Transverse colon (tissue), 4 donors: ENCODE measurements at regions of chr4 and their contacts with region 1.

Region 1: GRCh38 chr4:38297061-38297460 is 336.9 kb downstream of the PTTG2 start:
- DNase-seq: no peak
- H3K4me3 ChIP-seq: no peak overlapping the region
- H3K27ac ChIP-seq: no peak overlapping the region
- H3K4me1 ChIP-seq: no peaks in the 10 kb centered on the region
- H3K27me3 ChIP-seq: no peaks in the 10 kb centered on the region
- CTCF ChIP-seq: no peak
- EP300 ChIP-seq: no peak
- POLR2A ChIP-seq: no peak

Region 2: DNA sequence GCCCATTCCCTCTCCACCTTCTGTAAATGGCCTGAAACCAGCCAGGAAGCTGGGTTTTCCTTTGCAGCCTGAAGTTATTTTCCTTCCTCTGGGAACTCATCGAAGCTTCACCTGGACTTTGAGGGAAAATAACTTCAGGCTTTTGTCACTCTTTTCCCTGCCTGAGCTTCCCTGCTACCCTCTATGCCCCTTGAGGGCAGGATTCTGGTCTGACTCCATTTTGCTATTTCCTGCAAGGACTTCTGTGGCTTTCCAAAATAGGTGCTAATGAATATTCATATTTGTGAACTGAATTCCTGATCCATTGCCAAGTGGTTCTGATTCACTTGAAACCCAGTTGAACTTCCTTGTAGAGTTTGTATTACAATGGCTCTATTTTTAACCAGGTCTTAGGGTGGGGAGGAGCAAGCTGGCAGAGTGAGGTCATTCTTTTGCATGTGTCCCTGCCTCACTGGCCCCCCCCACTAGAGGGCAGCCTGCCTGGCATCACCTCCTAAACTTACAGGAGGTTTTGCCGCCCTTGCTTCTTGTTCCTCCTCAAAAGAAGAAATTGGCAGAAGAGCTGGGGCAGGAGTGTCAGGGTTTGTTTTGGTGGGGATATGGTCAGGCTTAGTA is 326.5 kb before region 1 on chr4:
- in situ Hi-C with region 1: no loop called
- intact Hi-C with region 1: no loop called
- DNase-seq: peak; percentile 86
- H3K4me3 ChIP-seq: no peak overlapping the region
- H3K27ac ChIP-seq: peak overlapping the region; percentile 54 to 76 (median 63)
- H3K4me1 ChIP-seq: peaks cover 4 to 32% (median 10%) of the 10 kb centered on the region in 4 donors
- H3K27me3 ChIP-seq: no peaks in the 10 kb centered on the region
- CTCF ChIP-seq: peak; percentile 39 to 75 (median 63)
- EP300 ChIP-seq: no peak
- POLR2A ChIP-seq: no peak

Region 3: DNA sequence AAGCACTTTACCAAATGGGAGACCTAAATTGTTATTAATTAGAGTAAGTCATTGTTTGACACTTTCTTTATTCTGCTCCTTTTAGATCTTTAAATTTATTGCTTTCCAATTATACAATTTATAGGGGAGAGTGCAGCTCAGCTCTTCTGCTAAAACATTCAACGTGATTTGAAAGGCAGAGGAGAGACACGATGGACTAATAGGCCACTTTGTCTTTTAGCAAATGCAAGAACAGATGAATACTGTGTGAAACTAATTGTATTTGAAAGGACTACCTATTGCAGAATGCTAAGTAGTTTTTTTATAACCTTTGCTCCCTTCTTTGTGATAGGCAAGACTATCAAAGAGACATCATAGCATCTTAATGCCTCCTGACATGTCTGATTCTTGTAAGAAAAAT is 46.5 kb after region 1 on chr4:
- in situ Hi-C with region 1: no loop called
- intact Hi-C with region 1: loop called (anchors 2 kb)
- DNase-seq: no peak
- H3K4me3 ChIP-seq: no peak overlapping the region
- H3K27ac ChIP-seq: no peak overlapping the region
- H3K4me1 ChIP-seq: no peaks in the 10 kb centered on the region
- H3K27me3 ChIP-seq: no peaks in the 10 kb centered on the region
- CTCF ChIP-seq: no peak
- EP300 ChIP-seq: no peak
- POLR2A ChIP-seq: no peak